ENCODE measurements at regions of chr17 and their contacts with region 1.

Region 1: DNA sequence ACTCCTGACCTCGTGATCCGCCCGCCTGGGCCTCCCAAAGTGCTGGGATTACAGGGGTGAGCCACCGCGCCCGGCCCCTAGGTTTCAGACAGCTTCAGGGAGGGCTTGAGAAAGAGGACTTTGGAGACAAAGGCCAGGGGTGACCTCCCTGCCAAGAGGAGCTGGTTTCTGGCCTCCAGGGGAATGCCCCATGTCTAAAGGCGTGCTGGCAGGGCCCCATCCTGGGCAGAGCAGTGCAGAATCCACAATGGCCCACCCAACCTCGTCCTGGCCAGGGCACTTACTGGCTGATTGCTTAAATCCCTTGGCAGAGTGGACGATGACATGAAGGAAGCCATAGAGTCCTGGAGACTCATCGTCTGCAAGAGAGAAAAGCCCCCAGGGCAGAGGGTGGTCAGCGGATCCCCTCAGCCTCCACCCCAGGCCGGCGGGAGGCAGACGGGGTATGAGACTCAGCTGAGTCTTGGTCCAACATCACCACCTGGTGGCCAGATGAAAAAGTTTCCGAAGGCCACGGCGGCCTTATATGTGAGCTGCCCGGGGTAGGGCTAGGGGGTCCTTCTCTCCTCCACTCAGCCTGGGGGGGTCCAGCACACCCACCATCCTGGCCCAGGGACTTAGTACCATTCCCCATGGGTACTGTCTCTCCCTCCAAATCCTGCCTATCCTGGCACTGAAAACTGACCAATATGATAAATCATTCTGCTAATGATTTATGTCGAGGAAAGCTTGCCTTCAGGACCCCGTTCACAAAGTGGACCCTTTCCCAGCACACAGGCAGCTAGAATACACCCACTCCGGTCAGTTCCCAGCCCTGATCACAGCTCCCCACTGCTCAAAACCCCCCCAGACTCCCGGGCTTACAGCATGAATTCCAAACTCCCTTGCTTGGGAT is 59.1 kb downstream of the TIMM22 start:
- DNase-seq: peak in 1 of 2 donors; percentile 85
- H3K4me3 ChIP-seq: no peak overlapping the region
- H3K27ac ChIP-seq: peak overlapping the region; percentile 50 to 56
- H3K4me1 ChIP-seq: peaks cover 0 to 3% of the 10 kb centered on the region in 2 donors
- H3K27me3 ChIP-seq: no peaks in the 10 kb centered on the region
- CTCF ChIP-seq: peak; percentile 76 to 79 (median 77)

Region 2: DNA sequence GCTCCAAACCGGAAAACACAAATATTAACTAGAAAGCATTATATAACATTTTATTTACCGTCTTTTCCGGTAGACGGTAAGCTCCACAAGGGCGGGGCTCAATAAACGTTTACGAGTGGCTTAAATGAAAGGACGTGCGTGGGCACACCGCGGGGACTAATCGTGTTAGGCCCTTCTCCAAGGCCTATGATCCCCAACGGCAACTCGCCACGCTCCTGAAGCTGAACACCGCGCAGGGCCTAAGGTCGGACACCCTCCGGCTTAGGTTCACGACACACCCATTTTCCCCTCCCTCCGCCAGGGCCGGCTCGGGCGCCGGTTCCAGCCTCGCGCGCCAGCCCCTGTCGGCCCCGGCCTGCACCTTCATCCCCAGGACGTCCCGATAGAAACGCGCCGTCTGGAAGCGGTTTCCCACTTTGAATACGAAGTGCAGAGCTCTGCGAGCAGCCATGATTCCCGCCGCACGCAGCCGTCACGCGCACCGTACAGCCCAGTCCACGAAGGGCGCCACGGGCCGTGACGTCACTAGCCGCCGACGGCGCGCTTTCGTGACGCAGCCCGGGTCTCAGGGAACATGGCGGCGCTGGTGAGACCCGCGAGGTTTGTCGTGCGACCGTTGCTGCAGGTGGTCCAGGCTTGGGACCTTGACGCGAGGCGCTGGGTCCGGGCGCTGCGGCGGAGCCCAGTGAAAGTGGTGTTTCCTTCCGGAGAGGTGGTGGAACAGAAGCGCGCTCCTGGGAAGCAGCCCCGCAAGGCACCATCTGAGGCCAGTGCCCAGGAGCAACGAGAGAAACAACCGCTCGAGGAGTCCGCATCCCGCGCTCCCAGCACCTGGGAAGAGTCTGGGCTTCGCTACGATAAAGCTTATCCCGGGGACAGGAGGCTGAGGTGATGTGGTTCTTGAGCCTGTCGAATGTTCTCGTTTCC is 273.9 kb before region 1 on chr17 and contains the starts of genes GLOD4 and MRM3:
- intact Hi-C with region 1: loop called (anchors 5 kb)
- DNase-seq: peak; percentile 86 to 97
- H3K4me3 ChIP-seq: peak within 1 kb of the TSS; percentile 77 to 85
- H3K27ac ChIP-seq: peak within 1 kb of the TSS; percentile 59 to 78
- H3K4me1 ChIP-seq: peaks cover 5 to 17% of the 10 kb centered on the region in 2 donors
- H3K27me3 ChIP-seq: no peaks in the 10 kb centered on the region
- CTCF ChIP-seq: peak; percentile 4 to 34 (median 18)
- total RNA-seq, gene GLOD4: 148 TPM
- total RNA-seq, gene MRM3: 17.0 TPM

Region 3: DNA sequence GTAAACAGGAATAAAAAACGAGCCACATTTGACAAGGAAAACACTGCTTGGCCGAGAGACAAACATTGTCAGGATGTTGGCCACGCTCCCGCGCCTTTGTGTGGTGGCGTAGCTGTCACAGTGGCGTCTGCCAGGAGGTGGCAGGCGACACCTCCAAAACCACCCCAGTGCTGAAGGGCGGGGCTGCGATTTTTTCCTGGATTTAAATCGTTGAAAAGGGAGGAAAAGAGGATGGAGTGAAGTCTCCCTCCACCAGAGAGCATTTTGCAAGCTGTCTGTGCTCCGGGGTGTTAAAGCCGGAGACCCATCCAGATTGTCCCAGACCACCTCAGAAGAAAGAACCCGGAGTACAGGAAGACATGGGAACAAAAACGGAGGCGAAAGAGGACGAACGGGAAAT is 261.1 kb before region 1 on chr17:
- intact Hi-C with region 1: loop called (anchors 5 kb)
- DNase-seq: peak in 1 of 2 donors; percentile 88
- H3K4me3 ChIP-seq: peak overlapping the region in 1 of 2 donors; percentile 52
- H3K27ac ChIP-seq: peak overlapping the region in 1 of 2 donors; percentile 35
- H3K4me1 ChIP-seq: peaks cover 0 to 7% of the 10 kb centered on the region in 2 donors
- H3K27me3 ChIP-seq: no peaks in the 10 kb centered on the region
- CTCF ChIP-seq: peak; percentile 74 to 92 (median 85)

Region 4: GRCh38 chr17:859061-859823 is 196.8 kb before region 1 on chr17:
- intact Hi-C with region 1: no loop called
- DNase-seq: no peak
- H3K4me3 ChIP-seq: no peak overlapping the region
- H3K27ac ChIP-seq: peak overlapping the region; percentile 25 to 53
- H3K4me1 ChIP-seq: peaks cover 0 to 14% of the 10 kb centered on the region in 2 donors
- H3K27me3 ChIP-seq: no peaks in the 10 kb centered on the region
- CTCF ChIP-seq: no peak

Region 5: GRCh38 chr17:969811-970355 is 86.1 kb before region 1 on chr17:
- intact Hi-C with region 1: no loop called
- DNase-seq: no peak
- H3K4me3 ChIP-seq: peak overlapping the region in 1 of 2 donors; percentile 35
- H3K27ac ChIP-seq: no peak overlapping the region
- H3K4me1 ChIP-seq: no peaks in the 10 kb centered on the region
- H3K27me3 ChIP-seq: no peaks in the 10 kb centered on the region
- CTCF ChIP-seq: no peak

Measured in ascending aorta (tissue), 2 donors.